ENCODE measurements at regions of chr10 and their contacts with region 1.

Region 1: GRCh38 chr10:23158370-23158769 is 33.7 kb upstream of the PTF1A start:
- DNase-seq: peak; percentile 76
- H3K4me3 Mint-ChIP-seq: no peak overlapping the region
- H3K27ac Mint-ChIP-seq: no peak overlapping the region
- H3K4me1 Mint-ChIP-seq: peaks cover 8% of the 10 kb centered on the region
- H3K27me3 Mint-ChIP-seq: peaks cover 6% of the 10 kb centered on the region

Region 2: GRCh38 chr10:23293145-23293724 is 134.9 kb after region 1 on chr10:
- intact Hi-C with region 1: loop called (anchors 2 kb)
- DNase-seq: peak; percentile 81
- H3K4me3 Mint-ChIP-seq: no peak overlapping the region
- H3K27ac Mint-ChIP-seq: no peak overlapping the region
- H3K4me1 Mint-ChIP-seq: no peaks in the 10 kb centered on the region
- H3K27me3 Mint-ChIP-seq: peaks cover 17% of the 10 kb centered on the region

Region 3: GRCh38 chr10:23702977-23703414 is 544.6 kb after region 1 on chr10:
- intact Hi-C with region 1: loop called (anchors 2 kb)
- DNase-seq: peak; percentile 85
- H3K4me3 Mint-ChIP-seq: no peak overlapping the region
- H3K27ac Mint-ChIP-seq: no peak overlapping the region
- H3K4me1 Mint-ChIP-seq: peaks cover 2% of the 10 kb centered on the region
- H3K27me3 Mint-ChIP-seq: peaks cover 18% of the 10 kb centered on the region

Region 4: GRCh38 chr10:24201503-24202180 is 1043.3 kb after region 1 on chr10:
- intact Hi-C with region 1: loop called (anchors 2 kb)
- DNase-seq: no peak
- H3K4me3 Mint-ChIP-seq: no peak overlapping the region
- H3K27ac Mint-ChIP-seq: no peak overlapping the region
- H3K4me1 Mint-ChIP-seq: peaks cover 9% of the 10 kb centered on the region
- H3K27me3 Mint-ChIP-seq: peaks cover 14% of the 10 kb centered on the region

Region 5: GRCh38 chr10:24556750-24557742 is 1398.7 kb after region 1 on chr10:
- intact Hi-C with region 1: loop called (anchors 5 kb)
- DNase-seq: peak; percentile 71
- H3K4me3 Mint-ChIP-seq: no peak overlapping the region
- H3K27ac Mint-ChIP-seq: no peak overlapping the region
- H3K4me1 Mint-ChIP-seq: peaks cover 4% of the 10 kb centered on the region
- H3K27me3 Mint-ChIP-seq: no peaks in the 10 kb centered on the region

Measured in activated CD4-positive, alpha-beta T cell treated with anti-CD3 and anti-CD28 coated beads, Interleukin-2, amount 10 ng/mL, durations not matched to agents 24 days and 14 days (primary cell).